ENCODE measurements at regions of chr10 and their contacts with region 1.

Region 1: GRCh38 chr10:3763035-3763456 is 22.0 kb downstream of the KLF6 start:
- DNase-seq: no peak
- ATAC-seq: no peak
- H3K4me3 ChIP-seq: no peak overlapping the region
- H3K27ac ChIP-seq: no peak overlapping the region
- H3K4me1 ChIP-seq: peaks cover 77% of the 10 kb centered on the region
- H3K27me3 ChIP-seq: peaks cover 0 to 6% of the 10 kb centered on the region in 2 experiments; a peak in 1 of 5 replicates
- CTCF ChIP-seq: no peak
- EP300 ChIP-seq: 0 out of 4 replicates have a peak, but pooled peaks of 1 of the 2 experiments have one; percentile 5
- POLR2A ChIP-seq: no peak
- RAD21 ChIP-seq: no peak

Region 2: DNA sequence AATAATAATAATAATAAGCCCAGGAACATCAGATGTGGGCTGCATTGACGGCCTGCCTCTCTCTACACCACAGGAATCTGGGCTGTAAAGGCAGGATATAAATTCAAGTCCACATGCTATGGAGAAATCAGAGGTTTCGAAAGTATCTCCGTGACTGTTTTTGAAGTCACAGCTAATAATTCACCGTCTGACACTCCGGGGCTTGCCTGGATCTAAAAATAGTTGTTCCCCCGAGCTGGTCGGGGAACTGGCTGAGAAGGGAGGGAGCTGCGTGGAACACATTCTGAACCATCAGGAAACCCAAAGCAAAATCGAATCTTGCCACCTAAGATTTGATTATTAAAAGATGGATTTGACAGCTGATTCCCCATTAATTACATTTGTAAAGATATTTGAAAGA is 13.4 kb before region 1 on chr10:
- CTCF ChIA-PET with region 1: no interaction called
- POLR2A ChIA-PET with region 1: interaction called, 4 read pairs
- in situ Hi-C with region 1: no loop called
- intact Hi-C with region 1: loop called (anchors 2 kb)
- DNase-seq: peak; percentile 31
- ATAC-seq: peak; percentile 19; the same call in 1 of the 3 replicates
- H3K4me3 ChIP-seq: peak overlapping the region; percentile 4 to 53 (median 52); a peak in 5 of 6 replicates
- H3K27ac ChIP-seq: no peak overlapping the region
- H3K4me1 ChIP-seq: peaks cover 78% of the 10 kb centered on the region
- H3K27me3 ChIP-seq: no peaks in the 10 kb centered on the region
- CTCF ChIP-seq: no peak
- EP300 ChIP-seq: no peak
- POLR2A ChIP-seq: no peak
- RAD21 ChIP-seq: no peak

Region 3: GRCh38 chr10:3776796-3777571 is 13.9 kb after region 1 on chr10:
- CTCF ChIA-PET with region 1: no interaction called
- POLR2A ChIA-PET with region 1: interaction called, 51 read pairs
- in situ Hi-C with region 1: no loop called
- intact Hi-C with region 1: no loop called
- DNase-seq: peak; percentile 58
- ATAC-seq: no peak
- H3K4me3 ChIP-seq: no peak overlapping the region
- H3K27ac ChIP-seq: no peak overlapping the region
- H3K4me1 ChIP-seq: peaks cover 42% of the 10 kb centered on the region
- H3K27me3 ChIP-seq: no peaks in the 10 kb centered on the region; a peak in 1 of 5 replicates
- CTCF ChIP-seq: no peak
- EP300 ChIP-seq: peak in 1 of 2 experiments; percentile 22; a peak in 1 of 4 replicates
- POLR2A ChIP-seq: peak in 1 of 2 experiments; percentile 60; a peak in 2 of 4 replicates
- RAD21 ChIP-seq: no peak

Region 4: GRCh38 chr10:4028027-4028471 is 265.0 kb after region 1 on chr10:
- CTCF ChIA-PET with region 1: no interaction called
- POLR2A ChIA-PET with region 1: no interaction called
- in situ Hi-C with region 1: no loop called
- intact Hi-C with region 1: no loop called
- DNase-seq: no peak
- ATAC-seq: no peak
- H3K4me3 ChIP-seq: no peak overlapping the region
- H3K27ac ChIP-seq: no peak overlapping the region
- H3K4me1 ChIP-seq: no peaks in the 10 kb centered on the region
- H3K27me3 ChIP-seq: peaks cover 3 to 47% of the 10 kb centered on the region in 2 experiments; a peak in 4 of 5 replicates
- CTCF ChIP-seq: no peak
- EP300 ChIP-seq: no peak
- POLR2A ChIP-seq: no peak
- RAD21 ChIP-seq: no peak

Measured in HepG2 (cell line).